GM13976 (cell line): ENCODE measurements at regions of chr15 and their contacts with region 1.

Region 1: GRCh38 chr15:66497502-66498455 is at the start of gene SNAPC5:
- DNase-seq: peak; percentile 93
- CTCF ChIP-seq: peak; percentile 96

Region 2: GRCh38 chr15:66014635-66015182 is 483.1 kb before region 1 on chr15:
- in situ Hi-C with region 1: no loop called
- DNase-seq: no peak
- CTCF ChIP-seq: no peak

Region 3: DNA sequence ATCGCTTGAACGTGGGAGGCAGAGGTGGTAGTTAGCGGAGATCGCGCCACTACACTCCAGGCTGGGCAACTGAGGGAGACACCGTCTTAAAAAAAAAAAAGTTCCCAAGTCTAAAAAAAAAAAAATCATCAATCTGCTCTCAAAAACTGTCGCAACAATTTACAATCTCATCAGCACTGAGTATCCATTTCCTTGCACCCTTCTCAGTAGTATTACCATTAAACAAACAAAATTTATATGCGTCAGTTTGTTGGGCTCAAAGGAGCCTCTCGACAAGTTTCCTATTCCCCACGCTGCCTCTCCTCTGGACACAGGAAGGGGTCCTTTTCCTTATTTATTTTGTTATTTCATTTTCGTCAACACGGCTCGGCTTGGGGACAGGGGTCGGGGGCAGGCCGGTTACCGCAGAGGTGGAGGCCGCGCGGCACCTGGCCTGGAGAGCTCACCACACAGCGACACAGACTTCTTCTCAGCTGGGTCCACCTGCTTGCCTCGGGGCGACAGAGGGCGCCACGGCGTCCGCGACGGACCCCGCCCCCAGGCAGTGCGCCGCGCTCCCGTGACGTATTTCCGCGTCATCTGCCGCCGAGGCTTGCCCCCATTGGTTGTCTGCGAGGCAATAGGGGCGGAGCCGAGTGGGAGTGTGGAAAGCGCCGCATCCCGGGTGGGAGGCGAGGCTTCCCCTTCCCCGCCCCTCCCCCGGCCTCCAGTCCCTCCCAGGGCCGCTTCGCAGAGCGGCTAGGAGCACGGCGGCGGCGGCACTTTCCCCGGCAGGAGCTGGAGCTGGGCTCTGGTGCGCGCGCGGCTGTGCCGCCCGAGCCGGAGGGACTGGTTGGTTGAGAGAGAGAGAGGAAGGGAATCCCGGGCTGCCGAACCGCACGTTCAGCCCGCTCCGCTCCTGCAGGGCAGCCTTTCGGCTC is 111.3 kb before region 1 on chr15 and contains the start of gene MAP2K1:
- in situ Hi-C with region 1: loop called (anchors 10 kb)
- DNase-seq: peak; percentile 97
- CTCF ChIP-seq: peak; percentile 91

Region 4: GRCh38 chr15:67120839-67121643 is 623.3 kb after region 1 on chr15:
- in situ Hi-C with region 1: no loop called
- DNase-seq: peak; percentile 84
- CTCF ChIP-seq: no peak